H1 (cell line): ENCODE measurements at regions of chr9 and their contacts with region 1.

Region 1: DNA sequence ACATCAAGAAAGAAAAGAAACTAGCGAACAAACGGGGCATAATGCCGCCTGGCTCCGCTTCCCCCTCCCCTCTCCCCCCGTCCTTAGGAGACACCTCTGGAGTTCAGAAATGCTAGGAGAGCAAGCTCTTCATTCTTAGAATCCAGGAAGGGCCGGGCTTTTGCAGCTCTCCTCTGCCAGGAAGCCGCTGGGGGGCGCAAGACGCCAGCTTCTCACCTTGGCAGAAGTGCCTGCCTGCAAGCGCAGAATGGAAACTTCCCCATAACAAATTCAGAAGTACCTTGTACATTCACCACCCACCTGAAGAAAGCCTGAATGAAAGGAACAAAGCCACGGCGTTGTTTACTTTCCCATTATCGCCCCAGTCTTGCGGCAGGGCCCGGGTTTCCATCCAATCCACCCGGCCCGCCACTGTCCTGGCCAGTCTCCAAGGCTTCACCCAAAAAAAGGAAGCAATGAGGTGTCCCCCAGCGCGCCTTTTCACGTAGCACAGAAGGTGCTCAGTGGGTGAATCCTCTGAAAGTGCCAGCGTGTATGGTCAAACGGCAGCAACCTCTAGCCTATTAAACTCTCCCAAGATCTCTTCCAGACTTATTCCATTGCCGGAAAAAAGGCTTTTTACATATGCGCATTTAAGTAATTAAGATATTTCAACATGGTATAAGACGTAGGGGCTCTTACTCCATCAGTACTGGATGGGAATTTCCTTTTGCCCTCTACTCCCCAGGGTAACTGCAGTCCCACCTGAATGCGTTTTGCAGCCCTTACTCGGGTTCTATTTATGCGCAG is 1.6 kb upstream of the GADD45G start:
- DNase-seq: peak; percentile 86 to 95
- H3K4me3 ChIP-seq: peak overlapping the region; percentile 3 to 86 (median 64); a peak in 7 of 8 replicates
- H3K27ac ChIP-seq: no peak overlapping the region
- H3K4me1 ChIP-seq: peaks cover 0 to 13% (median 9%) of the 10 kb centered on the region in 4 experiments; a peak in 5 of 7 replicates
- H3K27me3 ChIP-seq: peaks cover 0 to 18% (median 13%) of the 10 kb centered on the region in 4 experiments; a peak in 5 of 7 replicates
- CTCF ChIP-seq: peak; percentile 74 to 96 (median 86)
- EP300 ChIP-seq: no peak
- POLR2A ChIP-seq: no peak
- RAD21 ChIP-seq: peak; percentile 96 to 98

Region 2: GRCh38 chr9:89477811-89478630 is 125.2 kb before region 1 on chr9:
- CTCF ChIA-PET with region 1: no interaction called
- POLR2A ChIA-PET with region 1: no interaction called
- DNase-seq: no peak
- H3K4me3 ChIP-seq: no peak overlapping the region
- H3K27ac ChIP-seq: no peak overlapping the region
- H3K4me1 ChIP-seq: peaks cover 4 to 18% (median 5%) of the 10 kb centered on the region in 4 experiments
- H3K27me3 ChIP-seq: no peaks in the 10 kb centered on the region
- CTCF ChIP-seq: no peak
- EP300 ChIP-seq: no peak
- POLR2A ChIP-seq: no peak
- RAD21 ChIP-seq: no peak

Region 3: GRCh38 chr9:89519373-89519805 is 83.8 kb before region 1 on chr9:
- CTCF ChIA-PET with region 1: no interaction called
- POLR2A ChIA-PET with region 1: no interaction called
- DNase-seq: no peak
- H3K4me3 ChIP-seq: no peak overlapping the region
- H3K27ac ChIP-seq: no peak overlapping the region
- H3K4me1 ChIP-seq: no peaks in the 10 kb centered on the region
- H3K27me3 ChIP-seq: no peaks in the 10 kb centered on the region
- CTCF ChIP-seq: no peak
- EP300 ChIP-seq: no peak
- POLR2A ChIP-seq: no peak
- RAD21 ChIP-seq: no peak

Region 4: GRCh38 chr9:89655690-89656643 is 52.8 kb after region 1 on chr9:
- CTCF ChIA-PET with region 1: interaction called, 11 read pairs
- POLR2A ChIA-PET with region 1: interaction called, 10 read pairs
- DNase-seq: no peak
- H3K4me3 ChIP-seq: no peak overlapping the region
- H3K27ac ChIP-seq: no peak overlapping the region
- H3K4me1 ChIP-seq: peaks cover 0 to 18% (median 9%) of the 10 kb centered on the region in 4 experiments; a peak in 6 of 7 replicates
- H3K27me3 ChIP-seq: peaks cover 0 to 9% (median 0%) of the 10 kb centered on the region in 4 experiments; a peak in 1 of 7 replicates
- CTCF ChIP-seq: no peak
- EP300 ChIP-seq: no peak
- POLR2A ChIP-seq: no peak
- RAD21 ChIP-seq: no peak

Region 5: DNA sequence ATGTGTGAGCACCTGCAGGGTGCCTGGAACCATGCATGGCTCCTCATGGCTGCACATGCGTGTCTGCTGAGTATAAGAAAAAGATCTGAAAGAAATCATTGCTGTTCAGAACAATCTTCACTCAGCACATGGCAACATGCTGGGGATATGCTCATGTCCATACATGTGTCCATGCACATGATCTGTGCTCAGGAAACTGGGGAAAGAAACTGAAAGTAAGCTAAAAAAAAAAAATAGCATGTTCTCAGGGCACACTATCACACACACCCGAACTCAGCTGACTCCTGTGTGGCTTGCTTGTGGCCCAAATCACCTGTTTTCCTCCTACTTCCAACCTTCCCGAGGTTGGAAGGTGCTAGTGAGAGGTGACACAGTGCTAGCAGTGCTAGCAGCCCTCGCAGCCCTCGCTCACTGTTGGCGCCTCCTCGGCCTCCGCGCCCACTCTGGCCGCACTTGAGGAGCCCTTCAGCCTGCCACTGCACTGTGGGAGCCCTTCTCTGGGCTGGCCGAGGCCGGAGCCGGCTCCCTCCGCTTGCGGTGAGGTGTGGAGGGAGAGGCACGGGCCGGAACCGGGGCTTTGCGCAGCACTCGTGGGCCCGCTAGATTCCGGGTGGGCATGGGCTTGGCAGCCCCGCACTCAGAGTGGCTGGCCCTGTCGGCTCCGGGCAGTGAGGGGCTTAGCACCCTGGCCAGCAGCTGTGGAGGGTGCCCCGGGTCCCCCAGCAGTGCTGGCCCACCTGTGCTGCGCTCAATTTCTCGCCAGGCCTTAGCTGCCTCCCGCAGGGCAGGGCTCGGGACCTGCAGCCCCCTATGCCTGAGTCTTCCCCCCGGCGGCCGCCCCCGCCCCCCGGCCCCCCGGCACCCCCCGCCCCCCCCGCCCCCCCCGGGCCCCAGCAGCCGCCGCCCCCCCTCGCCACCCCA is 77.6 kb after region 1 on chr9:
- CTCF ChIA-PET with region 1: interaction called, 20 read pairs
- POLR2A ChIA-PET with region 1: interaction called, 89 read pairs
- DNase-seq: no peak
- H3K4me3 ChIP-seq: no peak overlapping the region
- H3K27ac ChIP-seq: no peak overlapping the region
- H3K4me1 ChIP-seq: peaks cover 17 to 33% (median 28%) of the 10 kb centered on the region in 4 experiments
- H3K27me3 ChIP-seq: peaks cover 0 to 19% (median 6%) of the 10 kb centered on the region in 4 experiments; a peak in 5 of 7 replicates
- CTCF ChIP-seq: no peak
- EP300 ChIP-seq: no peak
- POLR2A ChIP-seq: no peak
- RAD21 ChIP-seq: no peak

Region 6: GRCh38 chr9:89701221-89701798 is 98.1 kb after region 1 on chr9:
- CTCF ChIA-PET with region 1: interaction called, 14 read pairs
- POLR2A ChIA-PET with region 1: interaction called, 12 read pairs
- DNase-seq: no peak
- H3K4me3 ChIP-seq: no peak overlapping the region
- H3K27ac ChIP-seq: no peak overlapping the region
- H3K4me1 ChIP-seq: peaks cover 0 to 7% (median 5%) of the 10 kb centered on the region in 4 experiments; a peak in 3 of 7 replicates
- H3K27me3 ChIP-seq: no peaks in the 10 kb centered on the region
- CTCF ChIP-seq: no peak
- EP300 ChIP-seq: no peak
- POLR2A ChIP-seq: no peak
- RAD21 ChIP-seq: no peak

Region 7: DNA sequence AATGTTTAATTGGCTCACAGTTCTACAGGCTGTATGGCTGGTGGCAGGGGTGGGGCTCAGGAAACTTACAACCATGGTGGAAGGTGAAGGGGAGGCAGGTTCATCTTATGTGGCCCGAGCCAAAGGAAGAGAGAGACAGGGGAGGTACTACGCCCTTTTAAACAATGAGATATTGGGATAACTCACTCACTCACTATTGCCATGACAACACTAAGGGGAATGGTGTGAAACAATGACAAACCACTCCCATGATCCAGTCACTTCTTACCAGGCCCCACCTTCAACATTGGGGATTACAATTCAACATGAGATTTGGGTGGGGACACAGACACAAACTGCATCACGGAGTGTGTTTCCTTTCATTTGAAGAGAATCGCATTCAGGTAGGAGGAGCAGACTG is 222.5 kb after region 1 on chr9:
- CTCF ChIA-PET with region 1: interaction called, 10 read pairs
- POLR2A ChIA-PET with region 1: no interaction called
- DNase-seq: no peak
- H3K4me3 ChIP-seq: no peak overlapping the region
- H3K27ac ChIP-seq: no peak overlapping the region
- H3K4me1 ChIP-seq: peaks cover 0 to 2% (median 0%) of the 10 kb centered on the region in 4 experiments; a peak in 1 of 7 replicates
- H3K27me3 ChIP-seq: peaks cover 0 to 2% (median 0%) of the 10 kb centered on the region in 4 experiments; a peak in 1 of 7 replicates
- CTCF ChIP-seq: no peak
- EP300 ChIP-seq: no peak
- POLR2A ChIP-seq: no peak
- RAD21 ChIP-seq: no peak

Region 8: GRCh38 chr9:89929673-89930480 is 326.7 kb after region 1 on chr9:
- CTCF ChIA-PET with region 1: interaction called, 45 read pairs
- POLR2A ChIA-PET with region 1: no interaction called
- DNase-seq: no peak
- H3K4me3 ChIP-seq: no peak overlapping the region
- H3K27ac ChIP-seq: no peak overlapping the region; the same call in 1 of the 2 replicates
- H3K4me1 ChIP-seq: no peaks in the 10 kb centered on the region
- H3K27me3 ChIP-seq: no peaks in the 10 kb centered on the region; a peak in 1 of 7 replicates
- CTCF ChIP-seq: no peak
- EP300 ChIP-seq: no peak
- POLR2A ChIP-seq: no peak
- RAD21 ChIP-seq: no peak